ENCODE measurements at regions of chr19 and their contacts with region 1.

Region 1: DNA sequence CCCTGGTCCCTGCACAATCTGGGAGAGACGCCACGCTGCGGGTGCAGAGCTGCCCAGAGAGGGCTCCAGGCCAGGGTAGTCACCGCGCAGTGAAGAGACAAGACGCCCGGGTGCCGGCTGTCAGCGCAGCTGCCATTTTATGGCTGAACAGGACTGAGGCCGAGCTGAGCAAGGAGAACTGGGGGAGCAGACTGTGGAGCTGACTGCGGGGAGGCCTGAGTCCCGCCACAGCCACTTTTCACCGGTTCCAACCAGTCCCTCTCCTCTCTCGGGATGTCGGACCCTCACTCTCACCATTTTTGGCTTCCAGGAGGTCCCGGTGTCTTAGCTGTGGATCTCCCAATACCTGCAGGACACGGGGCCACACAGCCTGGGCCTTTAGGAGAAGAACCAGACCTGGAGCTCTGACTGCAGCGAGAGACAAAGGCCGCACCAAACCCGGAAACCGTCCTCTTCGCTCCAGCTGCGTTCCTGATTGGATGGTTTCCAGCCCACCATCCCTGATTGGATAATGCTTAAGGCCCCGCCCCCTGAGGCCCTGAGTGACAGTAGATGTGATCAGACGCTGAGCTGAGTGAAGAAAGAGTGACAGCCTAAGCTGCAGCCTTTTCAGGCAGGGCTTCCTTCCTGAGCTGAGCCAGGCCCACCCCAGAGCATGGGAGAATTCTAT is at the start of gene ZNF626:
- DNase-seq: peak; percentile 79 to 96 (median 86)
- ATAC-seq: peak; percentile 98
- H3K4me3 ChIP-seq: peak within 1 kb of the TSS; percentile 93
- H3K4me3 Mint-ChIP-seq: peak within 1 kb of the TSS; percentile 98
- H3K27ac ChIP-seq: peak within 1 kb of the TSS; percentile 59 to 81
- H3K27ac Mint-ChIP-seq: peak within 1 kb of the TSS; percentile 98
- H3K4me1 ChIP-seq: peaks cover 19% of the 10 kb centered on the region
- H3K4me1 Mint-ChIP-seq: peaks cover 65% of the 10 kb centered on the region
- H3K27me3 ChIP-seq: no peaks in the 10 kb centered on the region
- H3K27me3 Mint-ChIP-seq: no peaks in the 10 kb centered on the region
- CTCF ChIP-seq: no peak
- total RNA-seq, gene ZNF626: 6.7 to 6.8 TPM

Region 2: GRCh38 chr19:20167020-20167644 is 494.2 kb before region 1 on chr19 and contains the start of gene ZNF486:
- CTCF ChIA-PET with region 1: no interaction called
- POLR2A ChIA-PET with region 1: interaction called, 12 read pairs
- intact Hi-C with region 1: no loop called
- DNase-seq: peak; percentile 83 to 97 (median 88)
- ATAC-seq: peak; percentile 97
- H3K4me3 ChIP-seq: peak within 1 kb of the TSS; percentile 67
- H3K4me3 Mint-ChIP-seq: peak within 1 kb of the TSS; percentile 98
- H3K27ac ChIP-seq: no peak within 1 kb of the TSS
- H3K27ac Mint-ChIP-seq: peak within 1 kb of the TSS; percentile 87
- H3K4me1 ChIP-seq: peaks cover 13% of the 10 kb centered on the region
- H3K4me1 Mint-ChIP-seq: peaks cover 63% of the 10 kb centered on the region
- H3K27me3 ChIP-seq: no peaks in the 10 kb centered on the region
- H3K27me3 Mint-ChIP-seq: no peaks in the 10 kb centered on the region
- CTCF ChIP-seq: no peak
- total RNA-seq, gene ZNF486: 3.0 to 3.8 TPM

Region 3: DNA sequence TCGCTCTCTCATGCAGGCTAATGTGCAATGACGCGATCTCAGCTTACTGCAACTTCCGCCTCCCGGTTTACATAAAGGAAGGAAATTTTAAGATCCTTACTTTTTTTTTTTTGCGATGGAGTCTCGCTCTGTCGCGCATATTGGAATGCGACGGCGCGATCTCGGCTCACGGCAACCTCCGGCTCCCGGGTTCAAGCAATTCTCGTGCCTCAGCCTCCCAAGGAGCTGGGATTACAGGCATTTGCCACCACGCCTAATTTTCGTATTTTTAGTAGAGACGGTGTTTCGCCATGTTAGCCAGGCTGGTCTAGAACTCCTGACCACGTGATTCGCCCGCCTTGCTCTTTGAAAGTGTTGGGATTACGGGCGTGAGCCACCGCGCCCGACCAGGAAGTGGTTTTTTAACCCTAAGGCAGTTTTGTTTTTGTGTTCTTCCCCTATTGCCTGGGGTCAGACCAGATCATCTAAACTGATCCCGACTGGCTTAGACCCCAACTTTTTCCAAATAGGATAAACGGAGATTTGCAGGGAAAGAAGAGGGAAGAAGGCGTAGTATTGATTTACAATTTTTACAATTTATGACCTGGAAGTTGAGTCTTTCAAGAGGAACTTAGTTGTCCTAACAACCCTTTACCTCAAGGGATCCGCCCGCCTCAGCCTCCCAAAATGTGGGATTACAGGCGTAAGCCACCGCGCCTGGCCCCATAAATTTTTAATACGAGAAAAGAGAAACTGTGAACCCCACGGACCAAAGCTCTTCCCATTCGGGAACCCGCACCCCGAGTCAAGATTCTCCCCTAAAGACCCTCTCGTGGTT is 237.7 kb before region 1 on chr19:
- CTCF ChIA-PET with region 1: no interaction called
- POLR2A ChIA-PET with region 1: interaction called, 27 read pairs
- intact Hi-C with region 1: loop called in 1 of 2 experiments (anchors 10 kb)
- DNase-seq: peak in 9 of 14 experiments; percentile 6 to 64 (median 34)
- ATAC-seq: no peak
- H3K4me3 ChIP-seq: peak overlapping the region; percentile 83
- H3K4me3 Mint-ChIP-seq: peak overlapping the region; percentile 97
- H3K27ac ChIP-seq: peak overlapping the region; percentile 57 to 65
- H3K27ac Mint-ChIP-seq: peak overlapping the region; percentile 90
- H3K4me1 ChIP-seq: peaks cover 9% of the 10 kb centered on the region
- H3K4me1 Mint-ChIP-seq: peaks cover 15% of the 10 kb centered on the region
- H3K27me3 ChIP-seq: no peaks in the 10 kb centered on the region
- H3K27me3 Mint-ChIP-seq: no peaks in the 10 kb centered on the region
- CTCF ChIP-seq: no peak

Region 4: DNA sequence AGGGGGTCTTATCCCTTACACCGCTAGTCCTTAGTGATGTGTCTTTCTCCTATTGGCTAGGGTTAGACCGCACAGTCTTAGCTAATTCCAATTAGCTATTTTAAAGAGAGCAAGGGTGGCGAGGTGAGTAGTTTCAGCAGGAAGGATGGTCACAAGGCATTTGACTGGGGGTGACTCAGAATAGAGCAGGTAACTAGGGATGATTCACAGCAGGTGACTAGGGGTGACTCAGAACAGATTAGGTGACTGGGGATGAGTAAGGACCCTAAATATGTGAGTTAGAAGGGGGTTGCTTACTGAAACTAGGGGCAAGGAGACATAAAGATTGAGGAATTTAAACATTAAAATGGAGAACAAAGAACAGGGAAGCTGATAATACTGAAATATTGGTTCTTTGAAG is 179.1 kb after region 1 on chr19:
- CTCF ChIA-PET with region 1: no interaction called
- POLR2A ChIA-PET with region 1: no interaction called
- intact Hi-C with region 1: no loop called
- DNase-seq: no peak
- ATAC-seq: no peak
- H3K4me3 ChIP-seq: no peak overlapping the region
- H3K4me3 Mint-ChIP-seq: no peak overlapping the region
- H3K27ac ChIP-seq: no peak overlapping the region
- H3K27ac Mint-ChIP-seq: no peak overlapping the region
- H3K4me1 ChIP-seq: no peaks in the 10 kb centered on the region
- H3K4me1 Mint-ChIP-seq: no peaks in the 10 kb centered on the region
- H3K27me3 ChIP-seq: no peaks in the 10 kb centered on the region
- H3K27me3 Mint-ChIP-seq: no peaks in the 10 kb centered on the region
- CTCF ChIP-seq: no peak

Region 5: DNA sequence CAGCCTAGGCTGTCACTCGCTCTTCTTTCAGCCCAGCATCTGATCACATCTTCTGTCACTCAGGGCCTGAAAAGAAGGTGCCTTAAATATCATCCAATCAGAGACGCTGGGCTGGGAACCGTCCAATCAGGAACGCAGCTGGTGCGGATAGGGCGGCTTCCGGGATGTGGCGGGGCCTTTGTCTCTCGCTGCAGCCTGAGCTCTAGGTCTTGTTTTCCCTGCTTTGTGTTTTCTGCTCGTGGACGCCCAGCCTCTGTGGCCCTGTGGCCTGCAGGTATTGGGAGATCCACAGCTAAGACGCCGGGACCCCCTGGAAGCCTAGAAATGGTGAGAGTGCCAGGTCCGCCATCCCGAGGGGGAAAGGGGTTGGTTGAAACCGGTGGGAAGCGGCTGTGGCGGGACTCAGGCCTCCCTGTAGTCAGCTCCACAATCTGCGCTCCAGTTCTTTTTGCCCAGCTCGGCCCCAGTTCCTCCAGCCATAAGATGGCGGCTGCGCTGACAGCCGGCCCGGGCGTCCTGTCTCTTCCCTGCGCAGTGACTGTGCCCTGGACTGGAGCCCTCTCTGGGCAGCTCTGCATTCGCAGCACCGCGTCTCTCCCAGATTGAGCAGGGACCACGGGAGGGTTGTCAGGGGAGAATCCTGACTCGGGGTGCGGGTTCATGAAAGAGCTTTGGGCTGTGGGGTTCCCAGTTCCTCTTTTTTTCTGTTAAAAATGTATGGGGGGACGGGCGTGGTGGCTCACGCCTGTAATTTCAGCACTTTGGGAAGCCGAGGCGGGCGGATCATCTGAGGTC is 262.0 kb after region 1 on chr19 and contains the start of gene ZNF85:
- CTCF ChIA-PET with region 1: no interaction called
- POLR2A ChIA-PET with region 1: interaction called, 18 read pairs
- intact Hi-C with region 1: loop called in 1 of 2 experiments (anchors 10 kb)
- DNase-seq: peak; percentile 79 to 97 (median 86)
- ATAC-seq: peak; percentile 99
- H3K4me3 ChIP-seq: peak within 1 kb of the TSS; percentile 83
- H3K4me3 Mint-ChIP-seq: peak within 1 kb of the TSS; percentile 96
- H3K27ac ChIP-seq: peak within 1 kb of the TSS; percentile 44 to 75
- H3K27ac Mint-ChIP-seq: peak within 1 kb of the TSS; percentile 89
- H3K4me1 ChIP-seq: peaks cover 12% of the 10 kb centered on the region
- H3K4me1 Mint-ChIP-seq: peaks cover 26% of the 10 kb centered on the region
- H3K27me3 ChIP-seq: no peaks in the 10 kb centered on the region
- H3K27me3 Mint-ChIP-seq: no peaks in the 10 kb centered on the region
- CTCF ChIP-seq: no peak
- total RNA-seq, gene ZNF85: 3.4 to 4.7 TPM

Region 6: GRCh38 chr19:21141787-21142464 is 480.6 kb after region 1 on chr19 and contains the start of gene ZNF431:
- CTCF ChIA-PET with region 1: no interaction called
- POLR2A ChIA-PET with region 1: interaction called, 11 read pairs
- intact Hi-C with region 1: no loop called
- DNase-seq: peak; percentile 79 to 96 (median 84)
- ATAC-seq: peak; percentile 99
- H3K4me3 ChIP-seq: peak within 1 kb of the TSS; percentile 67
- H3K4me3 Mint-ChIP-seq: peak within 1 kb of the TSS; percentile 95
- H3K27ac ChIP-seq: peak within 1 kb of the TSS; percentile 25 to 37
- H3K27ac Mint-ChIP-seq: peak within 1 kb of the TSS; percentile 91
- H3K4me1 ChIP-seq: peaks cover 8% of the 10 kb centered on the region
- H3K4me1 Mint-ChIP-seq: peaks cover 45% of the 10 kb centered on the region
- H3K27me3 ChIP-seq: no peaks in the 10 kb centered on the region
- H3K27me3 Mint-ChIP-seq: no peaks in the 10 kb centered on the region
- CTCF ChIP-seq: no peak
- total RNA-seq, gene ZNF431: 24.6 to 25.9 TPM

Region 7: DNA sequence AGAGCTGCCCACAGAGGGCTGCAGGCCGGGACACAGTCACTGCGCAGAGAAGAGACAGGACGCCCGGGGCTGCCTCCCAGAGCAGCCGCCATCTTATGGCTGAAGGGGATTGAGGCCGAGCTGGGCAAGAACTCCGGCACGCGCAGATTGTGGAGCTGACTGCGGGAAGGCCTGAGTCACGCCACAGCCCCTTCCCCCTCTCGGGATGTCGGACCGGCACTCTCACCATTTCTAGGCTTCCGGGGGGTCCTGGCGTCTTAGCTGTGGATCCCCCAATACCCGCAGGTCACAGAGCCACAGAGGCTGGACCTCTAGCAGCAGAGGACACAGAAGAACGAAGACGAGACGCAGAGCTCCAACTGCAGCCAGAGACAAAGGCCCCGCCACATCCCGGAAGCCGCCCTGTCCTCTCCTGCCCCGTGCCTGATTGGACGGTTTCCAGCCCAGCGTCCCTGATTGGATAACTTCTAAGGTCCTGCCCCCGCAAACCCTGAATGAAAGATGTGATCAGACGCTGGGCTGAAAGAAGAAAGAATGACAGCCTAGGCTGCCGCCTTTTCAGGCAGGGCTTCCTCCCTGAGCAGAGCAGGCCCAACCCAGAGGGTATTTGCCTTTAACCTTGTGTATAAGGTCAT is 1174.6 kb after region 1 on chr19 and contains the start of gene ZNF43:
- CTCF ChIA-PET with region 1: no interaction called
- POLR2A ChIA-PET with region 1: interaction called, 5 read pairs
- intact Hi-C with region 1: loop called in 1 of 2 experiments (anchors 10 kb)
- DNase-seq: peak; percentile 87 to 97 (median 91)
- ATAC-seq: peak; percentile 98
- H3K4me3 ChIP-seq: peak within 1 kb of the TSS; percentile 81
- H3K4me3 Mint-ChIP-seq: peak within 1 kb of the TSS; percentile 97
- H3K27ac ChIP-seq: peak within 1 kb of the TSS; percentile 82 to 83
- H3K27ac Mint-ChIP-seq: peak within 1 kb of the TSS; percentile 94
- H3K4me1 ChIP-seq: peaks cover 14% of the 10 kb centered on the region
- H3K4me1 Mint-ChIP-seq: peaks cover 33% of the 10 kb centered on the region
- H3K27me3 ChIP-seq: no peaks in the 10 kb centered on the region
- H3K27me3 Mint-ChIP-seq: no peaks in the 10 kb centered on the region
- CTCF ChIP-seq: no peak
- total RNA-seq, gene ZNF43: 26.1 to 30.2 TPM

Measured in CD4-positive, alpha-beta T cell (primary cell).